Activated CD8-positive, alpha-beta T cell treated with anti-CD3 and anti-CD28 coated beads, Interleukin-2, amount 10 ng/mL, durations not matched to agents 7 days and 5 days (primary cell): ENCODE measurements at regions of chr15 and their contacts with region 1.

Region 1: DNA sequence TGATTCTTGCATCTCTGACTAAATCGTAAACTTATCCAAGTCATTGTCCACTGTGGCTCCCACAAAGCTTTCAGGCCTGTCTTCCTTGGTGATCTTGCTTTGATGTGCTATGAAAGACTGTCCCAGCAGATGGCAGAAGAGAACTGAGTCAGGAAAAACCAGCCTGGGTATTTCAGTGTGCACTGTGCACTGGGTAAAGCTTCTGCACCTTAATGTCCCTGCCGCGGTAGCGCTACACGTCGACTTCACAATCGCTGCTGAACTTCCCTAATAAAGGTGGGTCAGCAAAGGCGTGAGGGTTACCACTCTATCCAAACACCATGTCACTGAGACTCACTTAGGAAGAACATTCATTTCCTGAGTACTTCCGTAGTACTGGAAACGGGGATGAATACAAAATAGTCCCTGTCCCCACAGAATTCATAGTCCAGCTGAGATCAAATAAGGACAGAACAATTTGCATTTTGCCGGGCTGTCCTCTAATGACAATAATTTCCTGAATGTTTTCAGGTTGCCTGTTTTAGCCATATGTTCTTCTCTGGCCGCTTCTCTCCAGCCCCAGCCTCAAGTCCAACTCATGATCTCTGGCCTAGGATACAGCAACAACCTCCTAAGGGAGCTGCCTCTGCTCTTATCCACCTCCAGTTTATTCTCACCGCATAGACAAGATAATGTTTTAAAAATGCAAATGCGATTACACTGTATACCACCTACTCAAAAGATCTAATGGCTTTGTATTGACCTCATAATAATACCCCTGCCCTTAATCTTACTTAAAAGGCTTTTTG is 83.6 kb upstream of the AKAP13 start:
- DNase-seq: peak; percentile 85
- ATAC-seq: peak; percentile 97
- H3K4me3 Mint-ChIP-seq: peak overlapping the region; percentile 27
- H3K27ac Mint-ChIP-seq: peak overlapping the region; percentile 15
- H3K4me1 Mint-ChIP-seq: peaks cover 17% of the 10 kb centered on the region
- H3K27me3 Mint-ChIP-seq: peaks cover 7% of the 10 kb centered on the region

Region 2: GRCh38 chr15:85306946-85307708 is 10.3 kb after region 1 on chr15:
- CTCF ChIA-PET with region 1: interaction called, 15 read pairs
- POLR2A ChIA-PET with region 1: interaction called, 3 read pairs
- DNase-seq: no peak
- ATAC-seq: no peak
- H3K4me3 Mint-ChIP-seq: no peak overlapping the region
- H3K27ac Mint-ChIP-seq: no peak overlapping the region
- H3K4me1 Mint-ChIP-seq: peaks cover 14% of the 10 kb centered on the region
- H3K27me3 Mint-ChIP-seq: no peaks in the 10 kb centered on the region

Region 3: GRCh38 chr15:85318048-85318731 is 21.4 kb after region 1 on chr15:
- CTCF ChIA-PET with region 1: interaction called, 48 read pairs
- POLR2A ChIA-PET with region 1: interaction called, 7 read pairs
- DNase-seq: peak; percentile 35
- ATAC-seq: peak; percentile 59
- H3K4me3 Mint-ChIP-seq: no peak overlapping the region
- H3K27ac Mint-ChIP-seq: peak overlapping the region; percentile 68
- H3K4me1 Mint-ChIP-seq: peaks cover 43% of the 10 kb centered on the region
- H3K27me3 Mint-ChIP-seq: no peaks in the 10 kb centered on the region

Region 4: DNA sequence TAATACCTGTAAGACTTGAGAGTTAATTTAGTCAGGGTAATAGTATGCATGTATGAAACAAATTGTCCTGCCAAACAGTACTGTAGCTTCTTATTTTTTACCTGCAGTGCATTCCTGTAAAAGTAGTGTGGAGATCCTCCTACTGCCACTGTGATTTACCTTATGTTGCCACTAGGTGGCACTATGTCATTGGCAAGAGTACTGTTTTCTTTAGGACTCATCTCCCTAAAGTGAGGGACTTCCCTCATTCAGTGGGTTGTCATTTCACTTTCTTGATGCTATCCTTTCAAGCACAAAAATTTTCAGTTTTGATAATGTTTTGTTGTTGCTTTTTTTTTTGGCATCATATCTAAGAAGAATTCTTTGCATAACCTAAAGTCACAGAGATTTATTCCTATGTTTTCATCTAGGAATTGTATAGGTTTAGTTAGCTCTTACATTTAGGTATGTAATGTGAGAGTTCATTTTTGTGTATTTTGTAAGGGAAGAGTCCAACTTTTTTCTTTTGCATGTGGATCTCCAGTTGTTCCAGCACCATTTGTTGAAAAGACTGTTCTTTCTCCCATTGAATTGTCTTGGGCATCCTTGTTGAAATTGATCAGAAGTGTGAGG is 189.3 kb after region 1 on chr15:
- CTCF ChIA-PET with region 1: interaction called, 31 read pairs
- POLR2A ChIA-PET with region 1: no interaction called
- DNase-seq: peak; percentile 79
- ATAC-seq: peak; percentile 83
- H3K4me3 Mint-ChIP-seq: no peak overlapping the region
- H3K27ac Mint-ChIP-seq: no peak overlapping the region
- H3K4me1 Mint-ChIP-seq: peaks cover 46% of the 10 kb centered on the region
- H3K27me3 Mint-ChIP-seq: no peaks in the 10 kb centered on the region

Region 5: DNA sequence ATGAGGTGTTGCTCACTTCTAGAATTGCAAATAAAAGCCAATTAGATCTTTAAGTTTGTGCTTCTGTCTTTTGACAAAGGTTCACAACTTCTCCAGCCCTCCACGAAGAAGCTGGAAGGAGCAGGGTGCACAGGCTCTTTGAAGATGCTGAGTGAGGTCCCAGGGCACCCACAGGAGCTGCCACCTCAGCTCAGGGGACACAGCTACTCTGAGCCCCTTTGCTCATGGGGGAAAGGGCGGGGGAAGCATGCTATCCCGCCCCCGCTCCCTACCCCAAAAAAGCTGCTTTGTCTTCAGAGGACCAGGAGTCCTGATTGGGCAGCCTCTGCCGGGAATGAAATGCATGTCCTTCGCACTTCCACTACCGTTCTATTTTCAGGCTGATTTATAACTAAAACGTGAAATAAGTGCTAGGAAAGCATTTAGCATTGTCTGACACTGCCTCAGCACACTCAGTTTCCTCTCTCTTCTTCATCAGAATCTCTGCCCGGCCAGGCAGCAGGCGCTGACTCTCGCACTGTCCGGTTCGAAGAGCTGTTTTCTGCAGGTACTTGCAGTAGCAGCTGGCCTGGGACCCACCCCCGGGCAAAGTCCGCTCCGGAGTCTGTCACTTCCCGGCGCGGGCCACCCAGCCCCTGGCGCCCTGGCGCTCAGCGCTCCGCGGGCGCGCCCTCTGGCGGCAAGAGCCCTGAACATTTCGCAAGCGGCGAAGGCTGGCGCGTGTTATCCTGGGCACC is 543.4 kb after region 1 on chr15:
- CTCF ChIA-PET with region 1: interaction called, 11 read pairs
- POLR2A ChIA-PET with region 1: no interaction called
- DNase-seq: peak; percentile 83
- ATAC-seq: peak; percentile 100
- H3K4me3 Mint-ChIP-seq: peak overlapping the region; percentile 56
- H3K27ac Mint-ChIP-seq: no peak overlapping the region
- H3K4me1 Mint-ChIP-seq: peaks cover 2% of the 10 kb centered on the region
- H3K27me3 Mint-ChIP-seq: peaks cover 1% of the 10 kb centered on the region